ENCODE measurements at regions of chr19 and their contacts with region 1.

Region 1: DNA sequence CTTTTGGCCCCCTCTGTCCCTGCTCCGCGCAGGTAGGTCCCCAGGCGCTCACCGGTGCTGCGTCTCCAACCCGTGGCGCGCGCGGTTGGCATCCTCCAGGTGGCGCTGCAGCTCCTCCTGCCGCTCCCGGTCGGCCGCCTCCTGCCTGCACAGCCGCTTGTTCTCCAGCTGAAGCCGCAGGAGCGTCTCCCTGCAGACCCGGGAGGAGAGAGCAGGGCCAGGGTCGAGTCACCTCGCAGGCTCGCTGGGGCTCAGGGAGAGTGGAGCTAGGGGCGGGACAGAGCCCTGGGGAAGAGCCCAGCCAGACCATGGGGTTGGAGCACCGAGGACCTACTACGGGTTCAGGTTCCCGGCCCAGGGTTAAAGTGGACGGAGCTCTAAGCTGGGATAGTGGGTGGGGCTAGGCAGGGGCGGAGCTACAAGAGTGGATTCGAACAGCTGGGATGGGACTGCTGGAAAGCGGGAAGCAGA is 9.3 kb downstream of the HOOK2 start:
- DNase-seq: peak in 5 of 6 donors; percentile 63 to 91 (median 87)
- ATAC-seq: peak; percentile 75 to 95 (median 84)
- H3K4me3 ChIP-seq: peak overlapping the region in 2 of 4 donors; percentile 20 to 35
- H3K27ac ChIP-seq: no peak overlapping the region
- H3K4me1 ChIP-seq: no peaks in the 10 kb centered on the region
- H3K27me3 ChIP-seq: no peaks in the 10 kb centered on the region
- CTCF ChIP-seq: peak; percentile 38 to 54 (median 52)

Region 2: DNA sequence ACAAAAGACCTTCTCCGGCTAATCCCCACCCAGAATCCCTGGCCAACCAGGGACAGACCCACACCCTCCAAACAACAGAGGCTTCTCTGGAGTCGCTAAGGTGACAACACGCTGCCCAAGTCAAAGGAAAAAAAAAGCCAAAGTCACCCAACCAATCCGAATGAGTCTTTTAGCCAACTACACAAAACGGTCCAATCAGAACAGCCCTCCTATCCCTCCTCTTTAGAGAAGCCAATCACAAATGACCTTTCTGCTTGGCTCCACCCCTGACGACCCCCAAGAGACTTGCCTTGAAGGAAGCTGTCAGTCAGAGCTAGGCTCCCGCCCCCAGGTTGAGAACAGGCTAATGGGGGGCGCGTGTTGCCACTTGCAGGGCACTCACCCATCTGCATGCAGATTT is 63.0 kb before region 1 on chr19:
- intact Hi-C with region 1: no loop called
- DNase-seq: no peak
- ATAC-seq: peak in 1 of 4 donors; percentile 17
- H3K4me3 ChIP-seq: no peak overlapping the region
- H3K27ac ChIP-seq: no peak overlapping the region
- H3K4me1 ChIP-seq: no peaks in the 10 kb centered on the region
- H3K27me3 ChIP-seq: no peaks in the 10 kb centered on the region
- CTCF ChIP-seq: no peak

Region 3: GRCh38 chr19:12796146-12797071 is 30.3 kb after region 1 on chr19:
- intact Hi-C with region 1: loop called in 2 of 3 experiments (anchors 5 kb)
- DNase-seq: peak in 5 of 6 donors; percentile 71 to 84 (median 80)
- ATAC-seq: peak in 3 of 4 donors; percentile 23 to 34 (median 29)
- H3K4me3 ChIP-seq: no peak overlapping the region
- H3K27ac ChIP-seq: peak overlapping the region in 2 of 4 donors; percentile 23 to 42
- H3K4me1 ChIP-seq: peaks cover 0 to 20% (median 3%) of the 10 kb centered on the region in 3 donors
- H3K27me3 ChIP-seq: no peaks in the 10 kb centered on the region
- CTCF ChIP-seq: peak; percentile 79 to 93 (median 88)

Region 4: GRCh38 chr19:12801466-12802266 is 35.6 kb after region 1 on chr19 and contains the starts of genes PRDX2 and THSD8:
- intact Hi-C with region 1: loop called in 2 of 3 experiments (anchors 5 kb)
- DNase-seq: peak; percentile 76 to 96 (median 88)
- ATAC-seq: peak; percentile 90 to 92 (median 90)
- H3K4me3 ChIP-seq: peak within 1 kb of the TSS; percentile 64 to 89 (median 82)
- H3K27ac ChIP-seq: peak within 1 kb of the TSS; percentile 29 to 70 (median 63)
- H3K4me1 ChIP-seq: peaks cover 0 to 8% (median 5%) of the 10 kb centered on the region in 3 donors
- H3K27me3 ChIP-seq: no peaks in the 10 kb centered on the region
- CTCF ChIP-seq: no peak
- total RNA-seq, gene PRDX2: 77.5 to 109 (median 103) TPM
- total RNA-seq, gene THSD8: 0.90 to 3.9 (median 2.1) TPM

Region 5: DNA sequence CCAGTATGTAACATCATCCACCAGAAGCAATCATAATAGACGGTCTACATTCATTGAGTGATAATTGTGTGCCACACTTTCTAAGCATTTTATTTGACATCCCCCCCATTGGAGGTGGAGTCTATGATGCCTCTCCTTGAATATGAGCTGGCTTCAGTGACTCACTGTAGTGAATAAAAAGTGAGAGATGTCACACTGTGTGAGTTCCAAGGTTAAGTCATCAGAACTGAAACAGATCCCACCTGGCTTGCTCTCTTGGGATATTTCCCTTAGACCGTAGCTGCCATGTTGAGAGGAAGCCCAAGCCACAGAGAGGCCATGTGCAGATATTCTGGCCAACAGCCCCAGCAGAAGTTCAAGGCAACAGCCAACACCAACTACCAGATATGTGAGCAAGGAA is 55.7 kb after region 1 on chr19:
- intact Hi-C with region 1: no loop called
- DNase-seq: no peak
- ATAC-seq: no peak
- H3K4me3 ChIP-seq: no peak overlapping the region
- H3K27ac ChIP-seq: no peak overlapping the region
- H3K4me1 ChIP-seq: no peaks in the 10 kb centered on the region
- H3K27me3 ChIP-seq: peaks cover 0 to 5% (median 2%) of the 10 kb centered on the region in 4 donors
- CTCF ChIP-seq: no peak

Region 6: DNA sequence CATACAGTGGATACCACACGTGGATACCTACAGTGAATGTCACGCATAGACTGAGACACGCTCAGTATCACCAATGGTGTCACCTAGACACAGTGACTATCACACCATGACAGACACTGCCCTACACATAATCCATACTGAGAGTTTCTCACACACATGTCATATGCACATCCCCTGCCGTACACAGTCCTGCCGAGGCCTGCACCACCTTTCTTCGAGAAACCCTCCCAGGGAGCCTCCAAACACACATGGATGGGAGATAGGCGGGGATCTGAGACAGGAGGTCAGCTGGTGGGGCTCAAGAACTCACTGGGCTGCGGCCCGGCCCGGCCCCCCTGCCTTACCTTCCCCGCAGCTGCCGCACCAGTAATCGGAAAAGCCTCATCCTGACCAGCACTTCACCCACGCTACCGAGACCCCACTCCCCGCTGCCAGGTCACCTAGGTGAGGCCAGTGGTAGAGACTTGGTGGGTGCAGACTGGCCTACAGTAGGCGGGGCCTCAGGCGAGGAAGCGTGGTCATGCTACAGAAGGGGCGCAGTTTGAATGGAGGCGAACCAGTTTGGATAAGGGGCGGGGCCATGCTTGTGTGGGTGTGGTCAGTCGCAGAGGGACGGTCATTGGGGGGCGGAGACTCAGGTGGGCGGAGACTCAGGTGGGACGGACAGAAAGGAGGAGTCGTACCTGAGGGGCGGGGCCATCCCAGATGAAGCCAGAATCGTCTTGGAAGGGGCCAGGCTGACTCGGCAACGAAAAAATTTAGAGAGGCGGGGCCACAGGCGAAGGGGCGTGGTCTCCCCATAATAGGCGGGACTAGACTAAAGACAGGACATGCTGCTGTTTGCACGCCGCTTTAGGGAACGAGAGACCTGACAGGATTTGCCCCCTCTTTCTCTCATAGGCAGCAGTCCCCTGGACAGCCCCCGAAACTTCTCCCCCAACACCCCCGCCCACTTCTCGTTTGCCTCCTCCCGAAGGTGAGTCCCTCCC is 74.3 kb after region 1 on chr19:
- intact Hi-C with region 1: loop called in 1 of 3 experiments (anchors 5 kb)
- DNase-seq: peak; percentile 31 to 81 (median 70)
- ATAC-seq: peak; percentile 28 to 70 (median 60)
- H3K4me3 ChIP-seq: peak overlapping the region in 1 of 4 donors; percentile 28
- H3K27ac ChIP-seq: no peak overlapping the region
- H3K4me1 ChIP-seq: peaks cover 0 to 6% (median 0%) of the 10 kb centered on the region in 3 donors
- H3K27me3 ChIP-seq: peaks cover 0 to 16% (median 3%) of the 10 kb centered on the region in 4 donors
- CTCF ChIP-seq: no peak

Region 7: DNA sequence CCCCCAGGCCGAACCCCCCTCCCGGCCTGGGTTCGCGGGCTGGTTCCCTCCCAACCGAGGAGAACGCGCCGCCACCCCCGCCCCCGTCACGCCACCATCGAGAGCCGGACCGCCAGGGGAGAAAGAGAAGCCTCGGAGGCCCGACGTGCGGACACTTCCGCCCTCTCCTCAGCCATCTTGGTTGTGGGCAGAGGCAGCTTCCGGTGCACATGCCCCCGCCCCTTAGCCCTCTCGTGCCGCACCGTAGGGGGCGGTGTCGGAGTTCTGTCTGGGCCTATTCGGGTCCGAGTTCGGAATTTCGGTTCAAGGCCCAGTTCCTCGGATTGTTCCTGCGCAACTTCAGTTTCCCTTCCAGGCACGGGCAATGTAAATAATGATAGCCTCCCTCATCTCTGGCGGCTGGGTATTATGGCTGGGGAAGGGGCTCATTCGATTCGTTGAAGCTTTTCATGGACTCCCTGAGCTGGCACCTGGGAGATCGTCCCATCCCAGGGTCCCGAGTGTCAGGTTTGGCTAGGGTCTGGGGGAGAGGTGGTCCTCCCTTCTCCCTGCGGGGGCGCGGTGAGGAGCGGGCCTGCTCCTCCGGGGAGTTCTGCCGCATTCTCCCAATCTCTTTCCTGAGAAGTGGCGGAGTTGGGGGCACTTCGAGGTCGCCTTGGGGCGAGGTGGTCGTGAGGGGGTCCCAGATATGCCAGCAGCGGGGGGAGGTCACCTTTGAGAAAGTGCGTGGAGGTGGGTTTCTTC is 384.3 kb after region 1 on chr19 and contains the starts of genes IER2 and STX10:
- intact Hi-C with region 1: no loop called
- DNase-seq: peak; percentile 91 to 98 (median 96)
- ATAC-seq: peak; percentile 47 to 67 (median 66)
- H3K4me3 ChIP-seq: peak within 1 kb of the TSS; percentile 53 to 100 (median 91)
- H3K27ac ChIP-seq: peak within 1 kb of the TSS; percentile 89 to 99 (median 96)
- H3K4me1 ChIP-seq: peaks cover 0 to 6% (median 3%) of the 10 kb centered on the region in 3 donors
- H3K27me3 ChIP-seq: no peaks in the 10 kb centered on the region
- CTCF ChIP-seq: peak; percentile 30 to 53 (median 45)
- total RNA-seq, gene IER2: 32.4 to 59.2 (median 37.7) TPM
- total RNA-seq, gene STX10: 14.0 to 24.6 (median 17.0) TPM

Measured in pancreas (tissue), 10 donors.